ENCODE measurements at regions of chr6 and their contacts with region 1.

Region 1: GRCh38 chr6:17679726-17680125 is 27.0 kb downstream of the NUP153 start:
- DNase-seq: no peak
- ATAC-seq: no peak
- H3K4me3 ChIP-seq: no peak overlapping the region
- H3K4me3 Mint-ChIP-seq: peak overlapping the region; percentile 5
- H3K27ac ChIP-seq: no peak overlapping the region
- H3K27ac Mint-ChIP-seq: no peak overlapping the region
- H3K4me1 ChIP-seq: no peaks in the 10 kb centered on the region
- H3K4me1 Mint-ChIP-seq: peaks cover 76% of the 10 kb centered on the region
- H3K27me3 ChIP-seq: no peaks in the 10 kb centered on the region
- H3K27me3 Mint-ChIP-seq: no peaks in the 10 kb centered on the region
- CTCF ChIP-seq: no peak

Region 2: GRCh38 chr6:17640477-17640917 is 39.2 kb before region 1 on chr6:
- CTCF ChIA-PET with region 1: no interaction called
- POLR2A ChIA-PET with region 1: no interaction called
- intact Hi-C with region 1: loop called in 1 of 2 experiments (anchors 5 kb)
- DNase-seq: no peak
- ATAC-seq: no peak
- H3K4me3 ChIP-seq: no peak overlapping the region
- H3K4me3 Mint-ChIP-seq: no peak overlapping the region
- H3K27ac ChIP-seq: no peak overlapping the region
- H3K27ac Mint-ChIP-seq: peak overlapping the region; percentile 13
- H3K4me1 ChIP-seq: no peaks in the 10 kb centered on the region
- H3K4me1 Mint-ChIP-seq: peaks cover 8% of the 10 kb centered on the region
- H3K27me3 ChIP-seq: no peaks in the 10 kb centered on the region
- H3K27me3 Mint-ChIP-seq: no peaks in the 10 kb centered on the region
- CTCF ChIP-seq: no peak